RWPE1 (cell line): ENCODE measurements at regions of chr20 and their contacts with region 1.

Region 1: GRCh38 chr20:44475694-44476560 is at the start of gene TTPAL:
- DNase-seq: peak; percentile 99
- H3K27ac ChIP-seq: peak within 1 kb of the TSS; percentile 68
- CTCF ChIP-seq: no peak; the same call in 1 of the 2 replicates

Region 2: DNA sequence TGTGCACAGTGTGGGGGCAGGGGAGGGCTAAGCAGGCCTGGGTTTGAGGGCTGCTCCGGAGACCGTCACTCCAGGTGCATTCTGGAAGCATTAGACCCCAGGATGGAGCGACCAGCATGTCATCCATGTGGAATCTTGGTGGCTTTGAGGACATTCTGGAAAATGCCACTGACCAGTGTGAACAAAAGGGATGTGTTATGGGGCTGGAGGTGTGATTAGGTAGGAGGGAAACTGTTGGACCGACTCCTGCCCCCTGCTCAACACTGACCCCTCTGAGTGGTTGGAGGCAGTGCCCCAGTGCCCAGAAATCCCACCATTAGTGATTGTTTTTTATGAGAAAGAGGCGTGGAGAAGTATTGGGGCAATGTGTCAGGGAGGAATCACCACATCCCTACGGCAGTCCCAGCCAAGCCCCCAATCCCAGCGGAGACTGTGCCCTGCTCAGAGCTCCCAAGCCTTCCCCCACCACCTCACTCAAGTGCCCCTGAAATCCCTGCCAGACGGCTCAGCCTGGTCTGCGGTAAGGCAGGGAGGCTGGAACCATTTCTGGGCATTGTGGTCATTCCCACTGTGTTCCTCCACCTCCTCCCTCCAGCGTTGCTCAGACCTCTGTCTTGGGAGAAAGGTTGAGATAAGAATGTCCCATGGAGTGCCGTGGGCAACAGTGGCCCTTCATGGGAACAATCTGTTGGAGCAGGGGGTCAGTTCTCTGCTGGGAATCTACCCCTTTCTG is 44.3 kb before region 1 on chr20:
- CTCF ChIA-PET with region 1: no interaction called
- POLR2A ChIA-PET with region 1: interaction called, 10 read pairs
- DNase-seq: no peak
- H3K27ac ChIP-seq: no peak overlapping the region
- CTCF ChIP-seq: no peak

Region 3: DNA sequence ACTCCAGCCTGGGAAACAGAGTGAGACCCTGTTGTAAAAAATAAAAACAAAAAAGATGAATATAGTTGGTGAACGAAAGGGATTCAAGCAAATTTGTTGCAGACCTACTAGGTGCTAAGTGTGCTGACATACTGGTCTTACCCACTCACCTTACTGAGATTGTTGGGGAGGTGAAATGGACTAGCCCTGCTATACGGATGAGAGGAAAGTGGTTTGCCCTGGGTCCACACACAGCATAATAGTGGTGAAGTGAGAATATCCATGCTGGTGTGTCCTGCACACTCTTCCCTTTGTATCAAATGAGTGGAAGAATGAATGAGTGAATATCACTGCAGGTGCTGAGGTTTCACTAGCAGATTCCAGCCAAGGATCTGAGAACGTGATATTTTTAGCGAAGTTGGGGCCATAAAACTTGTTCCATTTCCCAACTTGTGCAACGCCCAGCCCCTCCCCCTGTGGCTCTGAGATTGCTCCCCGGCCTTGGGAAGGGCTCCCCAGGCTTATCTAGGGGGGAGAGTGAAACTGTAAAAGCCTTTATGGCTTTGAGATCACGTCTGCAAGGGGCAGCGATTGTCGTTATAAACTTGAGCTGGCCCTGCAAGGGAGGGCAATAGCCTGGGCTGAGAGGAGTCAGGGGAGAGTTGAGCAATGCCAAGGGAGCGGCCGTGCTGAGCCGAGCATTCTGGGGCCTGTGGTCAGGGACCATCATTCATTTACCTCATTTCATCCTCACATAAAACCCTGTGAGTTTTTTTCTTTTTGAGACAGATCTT is 33.4 kb before region 1 on chr20:
- CTCF ChIA-PET with region 1: no interaction called
- POLR2A ChIA-PET with region 1: no interaction called
- DNase-seq: peak; percentile 60
- H3K27ac ChIP-seq: peak overlapping the region; percentile 60
- CTCF ChIP-seq: no peak

Region 4: DNA sequence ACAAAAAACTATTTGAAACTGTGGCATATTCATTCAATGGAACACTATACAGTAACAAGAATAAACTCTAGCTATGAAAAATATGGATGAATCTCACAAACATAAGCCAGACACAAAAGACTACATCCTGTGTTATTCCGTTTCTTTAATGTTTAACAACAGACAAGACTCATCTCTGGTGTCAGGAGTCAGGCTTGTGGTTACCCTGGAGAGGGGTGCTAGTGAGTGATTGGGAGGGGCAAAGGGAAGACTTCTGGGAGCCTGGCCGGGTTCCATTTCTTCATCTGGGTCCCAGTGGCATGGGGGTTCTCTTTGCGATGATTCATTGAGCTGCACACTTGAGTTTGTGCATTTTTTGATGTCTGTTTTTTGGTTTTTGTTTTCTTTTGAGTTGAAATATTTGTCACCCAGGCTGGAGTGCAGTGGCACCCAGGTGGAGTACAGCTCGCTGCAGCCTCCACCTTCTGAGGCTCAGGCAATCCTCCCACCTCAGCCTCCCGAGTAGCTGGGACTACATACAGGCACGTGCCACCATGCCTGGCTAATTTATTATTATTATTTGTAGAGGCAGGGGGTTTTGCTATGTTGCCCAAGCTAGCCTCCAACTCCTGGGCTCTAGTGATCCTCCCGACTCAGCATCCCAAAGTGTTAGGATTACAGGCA is 21.5 kb before region 1 on chr20:
- CTCF ChIA-PET with region 1: no interaction called
- POLR2A ChIA-PET with region 1: no interaction called
- DNase-seq: no peak
- H3K27ac ChIP-seq: no peak overlapping the region
- CTCF ChIP-seq: no peak

Region 5: GRCh38 chr20:44586289-44586911 is 110.5 kb after region 1 on chr20:
- CTCF ChIA-PET with region 1: no interaction called
- POLR2A ChIA-PET with region 1: no interaction called
- DNase-seq: no peak
- H3K27ac ChIP-seq: no peak overlapping the region
- CTCF ChIP-seq: no peak

Region 6: DNA sequence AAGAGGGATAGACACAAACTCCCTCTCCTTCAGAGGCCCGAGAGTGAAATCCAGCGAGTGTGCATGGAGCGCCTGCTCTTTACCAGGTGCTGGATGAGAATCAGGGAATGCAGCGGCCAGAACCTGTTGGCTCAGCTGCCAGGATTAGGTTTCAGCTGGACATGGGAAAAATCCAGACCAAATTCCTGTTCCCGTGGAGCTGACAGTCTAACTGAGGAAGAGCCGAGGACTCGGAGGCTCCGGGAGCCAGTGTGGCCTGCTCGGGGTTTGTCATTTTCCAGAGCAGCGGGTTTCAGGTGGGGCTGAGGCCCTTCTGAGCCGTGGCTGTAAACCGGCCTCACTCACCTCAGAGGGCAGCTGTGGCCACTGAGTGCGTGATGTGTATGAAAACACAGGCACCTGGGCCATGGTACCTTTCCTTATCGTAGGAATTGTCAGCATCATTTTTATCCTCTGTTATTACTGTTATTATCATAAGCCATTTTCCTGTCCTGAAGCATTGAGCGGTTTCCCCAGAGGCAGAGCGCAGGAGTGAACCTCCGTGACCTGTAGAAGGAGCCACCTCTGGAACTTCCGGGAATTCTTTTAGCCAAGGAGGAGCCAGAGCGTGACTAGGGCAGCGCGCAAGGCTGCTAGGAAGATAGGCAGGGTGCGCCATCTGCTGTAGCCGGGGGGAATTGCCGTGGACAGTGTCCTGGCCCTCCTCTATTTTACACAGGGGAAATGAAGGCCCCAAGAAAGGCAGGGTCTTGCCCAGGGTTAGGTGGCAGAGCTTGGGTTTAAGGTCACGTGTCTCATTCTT is 133.8 kb after region 1 on chr20:
- CTCF ChIA-PET with region 1: interaction called, 19 read pairs
- POLR2A ChIA-PET with region 1: interaction called, 7 read pairs
- DNase-seq: peak; percentile 97
- H3K27ac ChIP-seq: peak overlapping the region; percentile 64
- CTCF ChIP-seq: peak; percentile 100